ENCODE measurements at regions of chr3 and their contacts with region 1.

Region 1: DNA sequence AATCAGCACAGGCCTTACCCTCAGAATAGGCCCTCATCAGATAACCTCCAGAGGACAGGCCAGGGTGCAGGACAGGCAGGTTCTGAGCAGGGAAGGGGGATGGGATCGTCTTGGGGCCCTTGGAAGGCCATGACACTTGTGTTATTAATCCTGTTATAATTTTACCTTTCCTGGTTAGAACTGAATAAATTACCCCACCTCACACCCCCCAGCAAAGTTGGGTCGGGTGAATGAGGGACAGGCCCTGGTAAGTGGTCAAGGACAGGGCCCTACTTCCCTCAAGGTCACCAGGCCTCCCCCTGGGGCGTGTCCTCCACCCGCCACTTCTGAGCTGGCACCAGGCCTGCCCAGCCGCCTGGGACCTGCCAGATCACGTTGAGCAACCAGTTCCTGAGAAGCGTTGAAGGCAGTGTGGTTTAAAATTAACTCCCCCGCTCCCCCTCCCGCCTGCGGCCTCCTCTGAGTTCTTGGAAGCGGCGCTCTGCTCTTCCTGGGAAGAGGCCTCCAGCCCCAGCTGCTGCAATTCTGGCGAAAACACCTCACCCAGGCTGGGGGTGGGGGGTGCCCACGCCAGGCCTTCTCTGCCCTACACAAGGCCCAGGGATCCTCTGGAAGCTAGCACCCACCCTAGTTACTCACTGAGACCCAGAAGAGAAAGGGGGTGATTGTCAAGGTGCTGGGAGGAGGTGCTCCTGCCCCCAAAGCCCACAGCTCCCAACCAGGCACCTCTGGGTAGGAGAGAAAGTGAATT is 10.6 kb downstream of the CISH start:
- DNase-seq: peak; percentile 97 to 98
- ATAC-seq: peak; percentile 67 to 77 (median 71)
- H3K4me3 ChIP-seq: peak overlapping the region; percentile 31
- H3K27ac ChIP-seq: peak overlapping the region; percentile 91
- H3K4me1 ChIP-seq: peaks cover 58% of the 10 kb centered on the region
- H3K27me3 ChIP-seq: no peaks in the 10 kb centered on the region
- CTCF ChIP-seq: no peak

Region 2: DNA sequence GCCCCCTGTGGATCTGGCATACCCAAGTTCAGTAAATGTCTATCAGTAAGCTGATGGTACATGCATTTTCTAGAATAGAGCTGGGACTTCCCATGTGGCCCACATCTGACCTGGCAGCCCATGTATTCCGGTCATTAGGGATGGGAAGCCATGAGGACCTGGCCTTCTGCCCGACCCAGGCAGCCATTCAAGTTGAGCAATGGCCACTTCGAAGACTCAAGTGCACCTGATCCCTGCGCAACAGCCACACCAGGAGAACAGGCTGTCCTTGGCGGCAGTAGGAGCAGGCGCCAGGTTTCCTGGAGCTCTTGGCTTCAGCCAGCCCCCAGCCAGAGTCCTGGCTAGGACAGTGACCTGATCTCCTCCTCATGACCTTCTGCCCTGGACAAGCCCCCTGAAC is 17.1 kb before region 1 on chr3:
- intact Hi-C with region 1: loop called (anchors 2 kb)
- DNase-seq: peak; percentile 96 to 99
- ATAC-seq: peak; percentile 76 to 88 (median 84)
- H3K4me3 ChIP-seq: no peak overlapping the region
- H3K27ac ChIP-seq: peak overlapping the region; percentile 84
- H3K4me1 ChIP-seq: peaks cover 79% of the 10 kb centered on the region
- H3K27me3 ChIP-seq: no peaks in the 10 kb centered on the region
- CTCF ChIP-seq: no peak